H1 (cell line): ENCODE measurements at regions of chr19 and their contacts with region 1.

Region 1: DNA sequence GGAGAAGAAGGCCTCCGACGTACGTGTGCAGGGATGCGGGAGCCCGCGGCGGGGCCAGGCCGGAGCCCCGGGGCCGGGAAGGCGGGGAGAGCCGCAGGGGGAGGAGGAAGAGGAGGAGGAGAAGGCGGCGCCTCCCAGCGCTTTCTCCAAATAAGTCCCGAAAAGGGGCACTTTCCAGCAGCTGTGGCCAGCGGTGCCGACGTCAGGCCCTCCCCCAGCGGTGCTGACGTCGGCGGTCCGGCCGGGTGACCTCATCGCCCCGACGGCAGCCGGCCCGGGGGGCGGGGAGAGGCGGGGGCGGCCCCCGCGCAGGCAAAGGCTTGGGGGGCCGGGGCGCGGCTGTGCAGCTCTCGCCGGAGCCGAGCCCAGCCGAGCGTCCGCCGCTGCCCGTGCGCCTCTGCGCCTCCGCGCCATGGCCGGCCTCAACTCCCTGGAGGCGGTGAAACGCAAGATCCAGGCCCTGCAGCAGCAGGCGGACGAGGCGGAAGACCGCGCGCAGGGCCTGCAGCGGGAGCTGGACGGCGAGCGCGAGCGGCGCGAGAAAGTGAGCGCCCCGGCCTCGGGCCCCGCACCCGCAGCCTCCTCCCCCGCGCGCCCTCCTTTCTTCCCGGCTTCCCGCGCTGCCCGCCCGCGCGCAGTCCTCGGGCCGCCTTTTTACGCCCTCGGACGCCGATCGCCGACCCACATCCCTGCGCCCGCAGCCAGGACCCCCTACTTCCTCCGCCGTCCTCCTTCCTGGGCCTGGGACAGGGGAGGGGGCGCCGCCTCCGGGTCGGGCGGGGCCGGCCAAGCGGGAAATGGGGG is at the start of gene TPM4:
- DNase-seq: peak; percentile 85 to 92
- H3K4me3 ChIP-seq: peak within 1 kb of the TSS; percentile 86 to 99 (median 96)
- H3K27ac ChIP-seq: peak within 1 kb of the TSS; percentile 98
- H3K4me1 ChIP-seq: peaks cover 0 to 8% (median 7%) of the 10 kb centered on the region in 4 experiments; a peak in 5 of 7 replicates
- H3K27me3 ChIP-seq: no peaks in the 10 kb centered on the region
- CTCF ChIP-seq: no peak
- EP300 ChIP-seq: peak in 1 of 2 experiments; percentile 82; a peak in 1 of 3 replicates
- POLR2A ChIP-seq: peak; percentile 80 to 98
- RAD21 ChIP-seq: no peak
- total RNA-seq, gene TPM4: 348 and 359 TPM in 2 replicates

Region 2: GRCh38 chr19:16062789-16063188 is 13.6 kb before region 1 on chr19:
- CTCF ChIA-PET with region 1: interaction called, 107 read pairs
- POLR2A ChIA-PET with region 1: interaction called, 99 read pairs
- DNase-seq: peak in 1 of 2 experiments; percentile 91
- H3K4me3 ChIP-seq: no peak overlapping the region
- H3K27ac ChIP-seq: no peak overlapping the region
- H3K4me1 ChIP-seq: peaks cover 0 to 5% (median 0%) of the 10 kb centered on the region in 4 experiments; a peak in 2 of 7 replicates
- H3K27me3 ChIP-seq: no peaks in the 10 kb centered on the region
- CTCF ChIP-seq: peak; percentile 55 to 94 (median 85)
- EP300 ChIP-seq: no peak
- POLR2A ChIP-seq: no peak
- RAD21 ChIP-seq: peak; percentile 49 to 53

Region 3: DNA sequence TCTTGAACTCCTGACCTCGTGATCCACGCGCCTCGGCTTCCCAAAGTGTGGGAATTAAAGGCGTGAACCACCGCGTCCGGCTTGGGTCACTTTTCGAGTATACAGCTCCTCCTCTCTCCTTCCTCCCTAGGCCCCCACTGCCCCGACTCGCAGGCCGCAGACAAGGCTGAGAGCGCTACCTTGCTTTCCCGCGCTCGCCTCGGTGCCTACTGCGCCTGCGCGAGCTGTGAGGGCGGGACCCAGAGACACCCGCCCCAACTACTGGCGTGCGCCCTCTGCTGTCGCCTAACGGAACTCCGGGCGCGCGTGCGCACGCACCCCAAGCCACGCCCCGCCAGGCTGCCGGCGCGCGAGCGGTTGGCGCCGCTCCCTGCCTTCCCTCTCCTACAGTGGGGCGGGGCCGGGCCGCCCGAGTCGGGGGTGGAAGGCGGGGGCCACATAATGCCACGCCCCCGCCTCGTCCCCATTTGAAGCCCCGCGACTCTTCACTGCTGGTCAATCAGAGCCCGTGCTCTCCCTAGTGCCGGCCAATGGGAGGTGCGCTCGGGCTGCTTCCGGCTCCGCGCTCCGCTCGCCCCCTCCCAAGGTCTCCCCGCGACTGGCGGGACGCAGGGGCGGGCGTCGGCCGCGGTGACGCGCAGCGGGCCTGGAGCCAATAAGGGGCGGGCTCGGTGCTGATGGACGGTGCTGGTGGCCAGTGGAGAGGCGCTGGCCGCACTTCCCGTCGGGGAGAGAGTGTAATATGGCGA is 35.0 kb after region 1 on chr19 and contains the start of gene RAB8A:
- CTCF ChIA-PET with region 1: interaction called, 5 read pairs
- POLR2A ChIA-PET with region 1: interaction called, 582 read pairs
- DNase-seq: peak; percentile 96 to 100
- H3K4me3 ChIP-seq: peak within 1 kb of the TSS; percentile 82 to 98 (median 93)
- H3K27ac ChIP-seq: peak within 1 kb of the TSS; percentile 73
- H3K4me1 ChIP-seq: peaks cover 0 to 7% (median 4%) of the 10 kb centered on the region in 4 experiments; a peak in 6 of 7 replicates
- H3K27me3 ChIP-seq: no peaks in the 10 kb centered on the region
- CTCF ChIP-seq: peak; percentile 78 to 88 (median 88)
- EP300 ChIP-seq: no peak
- POLR2A ChIP-seq: peak in 1 of 2 experiments; percentile 35; a peak in 2 of 3 replicates
- RAD21 ChIP-seq: peak; percentile 39 to 48; a peak in 2 of 4 replicates
- total RNA-seq, gene RAB8A: 90.1 and 97.0 TPM in 2 replicates

Region 4: GRCh38 chr19:16143399-16144245 is 67.3 kb after region 1 on chr19 and contains the start of gene HSH2D:
- CTCF ChIA-PET with region 1: no interaction called
- POLR2A ChIA-PET with region 1: interaction called, 22 read pairs
- DNase-seq: peak; percentile 59 to 63
- H3K4me3 ChIP-seq: peak within 1 kb of the TSS in 1 of 4 experiments; percentile 35; a peak in 2 of 8 replicates
- H3K27ac ChIP-seq: no peak within 1 kb of the TSS
- H3K4me1 ChIP-seq: peaks cover 0 to 5% (median 1%) of the 10 kb centered on the region in 4 experiments; a peak in 2 of 7 replicates
- H3K27me3 ChIP-seq: no peaks in the 10 kb centered on the region
- CTCF ChIP-seq: no peak
- EP300 ChIP-seq: no peak
- POLR2A ChIP-seq: no peak
- RAD21 ChIP-seq: no peak
- total RNA-seq, gene HSH2D: 0.67 and 0.75 TPM in 2 replicates

Region 5: DNA sequence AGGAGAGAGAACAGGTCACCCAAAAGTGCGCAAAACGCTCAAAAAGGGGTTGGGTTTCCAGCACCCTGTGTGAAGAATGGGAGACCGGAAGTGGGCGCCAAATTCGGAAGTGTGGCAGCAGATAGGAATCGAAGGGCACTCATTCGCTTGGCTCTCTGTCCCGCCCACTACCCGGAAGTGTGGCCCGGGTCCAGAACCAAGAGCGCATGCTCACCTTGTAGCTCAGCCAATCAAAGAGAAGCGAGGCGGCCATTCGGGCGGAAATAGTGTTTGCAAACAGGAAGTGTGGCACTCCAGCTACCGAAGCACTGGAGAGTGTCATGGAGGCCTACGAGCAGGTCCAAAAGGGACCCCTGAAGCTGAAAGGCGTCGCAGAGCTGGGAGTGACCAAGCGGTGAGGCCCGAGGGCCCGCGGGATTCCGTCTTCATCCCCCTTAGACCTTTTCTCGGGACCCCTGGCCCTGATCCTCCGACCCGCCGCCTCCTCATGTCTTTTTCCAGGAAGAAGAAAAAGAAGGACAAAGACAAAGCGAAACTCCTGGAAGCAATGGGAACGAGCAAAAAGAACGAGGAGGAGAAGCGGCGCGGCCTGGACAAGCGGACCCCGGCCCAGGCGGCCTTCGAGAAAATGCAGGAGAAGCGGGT is 108.9 kb after region 1 on chr19 and contains the start of gene FAM32A:
- CTCF ChIA-PET with region 1: interaction called, 3 read pairs
- POLR2A ChIA-PET with region 1: interaction called, 10 read pairs
- DNase-seq: peak; percentile 92 to 98
- H3K4me3 ChIP-seq: peak within 1 kb of the TSS; percentile 71 to 96 (median 92)
- H3K27ac ChIP-seq: peak within 1 kb of the TSS; percentile 80
- H3K4me1 ChIP-seq: peaks cover 0 to 2% (median 0%) of the 10 kb centered on the region in 4 experiments; a peak in 1 of 7 replicates
- H3K27me3 ChIP-seq: no peaks in the 10 kb centered on the region
- CTCF ChIP-seq: peak in 2 of 3 experiments; percentile 20 to 30; a peak in 2 of 4 replicates
- EP300 ChIP-seq: no peak
- POLR2A ChIP-seq: peak; percentile 91 to 95
- RAD21 ChIP-seq: no peak
- total RNA-seq, gene FAM32A: 75.6 and 78.9 TPM in 2 replicates